GM12878 (cell line): ENCODE measurements at regions of chr2 and their contacts with region 1.

Region 1: DNA sequence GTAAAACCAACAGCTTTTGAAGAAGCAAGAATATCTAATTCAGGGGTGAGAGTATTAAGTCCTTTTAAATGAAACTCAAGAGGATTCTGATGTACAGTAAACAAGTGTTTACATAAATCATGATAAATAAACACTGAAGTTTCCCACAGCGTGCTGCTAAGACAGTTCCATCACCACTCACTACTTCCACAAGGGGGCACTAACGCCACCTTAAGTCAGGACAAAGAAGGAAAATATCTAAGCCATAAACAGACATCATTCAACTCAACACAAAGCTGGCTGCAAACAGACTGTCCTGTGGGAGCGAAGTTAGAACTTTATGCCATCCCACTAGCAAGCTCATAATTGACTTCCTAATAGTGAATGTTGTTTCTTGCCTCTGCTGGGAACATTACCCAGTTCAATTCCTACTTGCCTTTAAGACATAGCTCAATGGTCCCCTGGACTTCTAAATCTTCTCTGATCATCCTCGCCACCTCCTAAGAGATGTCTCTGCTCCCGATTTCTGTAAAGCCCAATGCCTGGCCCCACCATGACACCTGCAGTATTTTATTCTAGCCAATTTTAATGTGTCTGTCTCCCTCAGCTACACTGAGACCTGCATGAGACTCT is 36.5 kb downstream of the MRPL44 start:
- DNase-seq: no peak
- ATAC-seq: peak; percentile 87
- H3K4me3 ChIP-seq: no peak overlapping the region
- H3K27ac ChIP-seq: no peak overlapping the region
- H3K4me1 ChIP-seq: no peaks in the 10 kb centered on the region
- H3K27me3 ChIP-seq: peaks cover 0 to 4% of the 10 kb centered on the region in 2 experiments; a peak in 2 of 4 replicates
- CTCF ChIP-seq: peak; percentile 71 to 81 (median 78)
- EP300 ChIP-seq: no peak
- POLR2A ChIP-seq: no peak
- RAD21 ChIP-seq: peak; percentile 71

Region 2: DNA sequence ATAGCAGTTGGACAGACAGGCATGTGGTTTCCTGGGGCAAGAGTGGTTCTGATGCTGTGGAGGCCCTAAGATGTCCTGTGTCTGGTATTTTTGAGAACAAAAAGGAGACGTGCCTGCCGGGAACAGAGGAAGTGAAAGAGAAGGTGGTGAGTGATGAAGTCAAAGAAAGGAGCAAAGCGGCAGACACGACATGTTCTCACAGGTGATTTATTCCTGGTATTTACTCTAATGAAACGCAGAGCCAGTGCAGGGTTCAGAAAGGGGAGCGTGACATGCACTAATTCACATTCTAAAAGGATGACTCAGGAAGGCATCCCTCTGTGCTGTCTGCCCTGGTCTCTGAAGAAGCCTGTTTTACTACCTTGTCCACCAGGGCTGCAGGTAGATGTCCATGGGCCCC is 730.8 kb before region 1 on chr2:
- CTCF ChIA-PET with region 1: no interaction called
- POLR2A ChIA-PET with region 1: no interaction called
- RAD21 ChIA-PET with region 1: no interaction called
- SMC1A ChIA-PET with region 1: no interaction called
- in situ Hi-C with region 1: no loop called
- intact Hi-C with region 1: no loop called
- DNase-seq: no peak
- ATAC-seq: no peak; the same call in 1 of the 3 replicates
- H3K4me3 ChIP-seq: no peak overlapping the region
- H3K27ac ChIP-seq: no peak overlapping the region
- H3K4me1 ChIP-seq: no peaks in the 10 kb centered on the region
- H3K27me3 ChIP-seq: no peaks in the 10 kb centered on the region
- CTCF ChIP-seq: no peak
- EP300 ChIP-seq: no peak
- POLR2A ChIP-seq: no peak
- RAD21 ChIP-seq: no peak

Region 3: DNA sequence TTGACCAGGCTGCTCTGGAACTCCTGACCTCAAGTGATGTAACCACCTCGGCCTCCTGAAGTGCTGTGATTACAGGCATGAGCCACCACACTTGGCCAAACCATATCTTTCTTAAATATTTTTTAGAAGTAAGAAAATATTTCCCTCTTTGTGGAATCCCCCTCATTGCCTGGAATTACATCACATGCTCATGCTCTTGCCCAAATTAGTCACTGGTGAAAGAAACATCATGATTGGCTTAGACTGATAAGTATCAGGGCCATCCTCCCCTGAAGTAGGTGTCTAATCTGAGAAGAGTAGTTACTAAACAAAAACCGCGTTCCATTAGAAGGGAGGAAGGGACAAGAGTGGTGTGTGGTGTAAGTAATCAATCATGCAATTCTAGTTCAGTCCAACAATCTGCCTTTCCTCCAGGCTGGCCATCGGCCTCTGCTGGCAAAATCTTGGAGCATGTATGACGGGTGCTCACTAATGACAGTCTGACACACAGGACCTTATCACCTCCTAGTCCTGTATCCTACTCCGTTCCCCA is 339.3 kb before region 1 on chr2:
- CTCF ChIA-PET with region 1: no interaction called
- POLR2A ChIA-PET with region 1: no interaction called
- RAD21 ChIA-PET with region 1: no interaction called
- SMC1A ChIA-PET with region 1: no interaction called
- in situ Hi-C with region 1: no loop called
- intact Hi-C with region 1: no loop called
- DNase-seq: no peak
- ATAC-seq: no peak
- H3K4me3 ChIP-seq: no peak overlapping the region
- H3K27ac ChIP-seq: no peak overlapping the region
- H3K4me1 ChIP-seq: no peaks in the 10 kb centered on the region
- H3K27me3 ChIP-seq: no peaks in the 10 kb centered on the region
- CTCF ChIP-seq: no peak
- EP300 ChIP-seq: no peak
- POLR2A ChIP-seq: no peak
- RAD21 ChIP-seq: no peak

Region 4: GRCh38 chr2:223957092-223957851 is 36.5 kb before region 1 on chr2 and contains the start of gene MRPL44:
- CTCF ChIA-PET with region 1: interaction called, 18 read pairs
- POLR2A ChIA-PET with region 1: no interaction called
- RAD21 ChIA-PET with region 1: no interaction called
- SMC1A ChIA-PET with region 1: interaction called, 5 read pairs
- in situ Hi-C with region 1: no loop called
- intact Hi-C with region 1: no loop called
- DNase-seq: peak; percentile 76
- ATAC-seq: peak; percentile 99
- H3K4me3 ChIP-seq: peak within 1 kb of the TSS; percentile 87
- H3K27ac ChIP-seq: peak within 1 kb of the TSS; percentile 87
- H3K4me1 ChIP-seq: peaks cover 24% of the 10 kb centered on the region
- H3K27me3 ChIP-seq: no peaks in the 10 kb centered on the region
- CTCF ChIP-seq: no peak
- EP300 ChIP-seq: no peak
- POLR2A ChIP-seq: peak; percentile 96
- RAD21 ChIP-seq: no peak
- polyA plus RNA-seq, gene MRPL44: 18.3 to 22.0 TPM

Region 5: GRCh38 chr2:223979730-223980396 is 13.9 kb before region 1 on chr2:
- CTCF ChIA-PET with region 1: interaction called, 149 read pairs
- POLR2A ChIA-PET with region 1: no interaction called
- RAD21 ChIA-PET with region 1: interaction called, 5 read pairs
- SMC1A ChIA-PET with region 1: interaction called, 15 read pairs
- in situ Hi-C with region 1: no loop called
- intact Hi-C with region 1: no loop called
- DNase-seq: no peak
- ATAC-seq: no peak
- H3K4me3 ChIP-seq: no peak overlapping the region
- H3K27ac ChIP-seq: no peak overlapping the region
- H3K4me1 ChIP-seq: no peaks in the 10 kb centered on the region
- H3K27me3 ChIP-seq: no peaks in the 10 kb centered on the region; a peak in 2 of 4 replicates
- CTCF ChIP-seq: no peak
- EP300 ChIP-seq: no peak
- POLR2A ChIP-seq: no peak
- RAD21 ChIP-seq: no peak

Region 6: DNA sequence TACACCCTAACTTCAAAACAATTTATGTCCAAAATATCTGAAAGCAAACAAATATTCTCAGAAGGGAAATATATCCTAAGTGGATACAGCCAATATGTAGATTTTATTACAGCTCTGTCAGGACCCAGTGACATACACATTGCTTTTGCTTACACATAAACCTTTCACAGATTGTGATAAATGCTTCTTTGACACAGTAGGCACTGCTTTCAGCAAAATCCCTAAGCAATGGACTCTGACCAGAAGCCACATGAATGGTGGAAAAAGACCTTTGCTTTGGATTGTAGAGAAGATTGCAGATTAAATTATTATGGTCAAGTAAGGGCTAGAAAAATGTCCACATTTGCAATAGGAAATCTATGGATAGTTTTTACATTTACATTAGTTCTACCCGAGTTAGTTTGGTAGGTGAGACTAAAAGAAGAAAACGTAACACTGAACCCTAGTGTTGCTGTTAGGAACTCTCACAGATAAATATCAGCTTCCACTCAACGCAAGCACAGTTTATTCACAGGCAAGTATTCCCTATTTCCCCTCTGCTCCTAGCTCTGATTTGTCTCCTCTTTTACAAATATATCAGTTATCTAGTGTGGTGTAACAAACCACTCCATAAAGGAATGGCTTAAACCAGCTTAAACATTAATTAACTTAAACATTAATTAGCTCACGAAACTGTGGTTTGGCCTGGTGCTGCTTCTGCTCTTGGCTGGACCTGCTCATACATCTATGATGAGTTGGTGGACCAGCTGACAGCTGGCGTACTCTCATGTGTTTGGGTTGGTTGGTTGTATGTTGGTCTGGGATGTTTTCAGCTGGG is 69.0 kb after region 1 on chr2:
- CTCF ChIA-PET with region 1: interaction called, 14 read pairs
- POLR2A ChIA-PET with region 1: no interaction called
- RAD21 ChIA-PET with region 1: no interaction called
- SMC1A ChIA-PET with region 1: interaction called, 4 read pairs
- in situ Hi-C with region 1: no loop called
- intact Hi-C with region 1: no loop called
- DNase-seq: no peak
- ATAC-seq: no peak
- H3K4me3 ChIP-seq: no peak overlapping the region
- H3K27ac ChIP-seq: no peak overlapping the region
- H3K4me1 ChIP-seq: no peaks in the 10 kb centered on the region
- H3K27me3 ChIP-seq: peaks cover 0 to 2% of the 10 kb centered on the region in 2 experiments; a peak in 1 of 4 replicates
- CTCF ChIP-seq: 0 out of 6 replicates have a peak, but pooled peaks of 1 of the 3 experiments have one; percentile 0
- EP300 ChIP-seq: no peak
- POLR2A ChIP-seq: no peak
- RAD21 ChIP-seq: no peak

Region 7: DNA sequence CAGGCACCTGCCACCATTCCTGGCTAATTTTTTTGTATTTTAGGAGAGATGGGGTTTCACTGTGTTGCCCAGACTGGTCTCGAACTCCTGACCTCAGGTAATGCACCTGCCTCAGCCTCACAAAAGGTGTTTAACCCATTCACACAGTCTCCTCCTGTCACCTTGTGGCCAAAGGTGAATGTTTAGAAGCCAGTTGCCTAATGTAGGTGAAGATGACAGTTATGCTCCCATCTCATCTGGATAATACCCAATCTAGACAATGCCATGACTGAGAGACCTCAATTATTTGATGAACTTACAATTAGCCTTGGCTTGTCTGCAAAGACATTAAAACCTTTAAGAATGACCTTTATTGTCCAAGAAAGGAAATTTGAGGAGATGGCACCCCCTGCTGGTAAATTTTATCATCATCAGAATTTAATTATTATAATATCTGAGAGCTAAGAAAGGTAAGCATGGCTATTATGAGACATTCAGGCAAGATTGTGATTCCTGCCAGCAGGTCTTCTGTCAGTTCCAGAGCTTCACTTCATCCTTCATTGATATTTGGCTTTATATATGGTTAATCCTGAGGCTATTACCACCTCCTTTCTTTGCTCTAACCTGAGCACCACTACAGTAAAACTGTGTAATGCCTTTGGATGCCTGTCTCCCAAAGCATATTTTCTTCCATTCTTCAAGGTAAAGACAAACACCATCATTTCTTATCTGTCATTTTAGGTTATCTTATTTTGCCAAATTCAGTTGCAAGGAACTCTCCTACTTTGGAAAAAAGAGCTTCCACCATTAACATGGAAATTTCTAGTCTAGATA is 290.6 kb after region 1 on chr2:
- CTCF ChIA-PET with region 1: interaction called, 188 read pairs
- POLR2A ChIA-PET with region 1: no interaction called
- RAD21 ChIA-PET with region 1: interaction called, 93 read pairs
- SMC1A ChIA-PET with region 1: interaction called, 108 read pairs
- in situ Hi-C with region 1: loop called (anchors 5 kb)
- intact Hi-C with region 1: loop called (anchors 1 kb)
- DNase-seq: no peak
- ATAC-seq: peak; percentile 52
- H3K4me3 ChIP-seq: no peak overlapping the region
- H3K27ac ChIP-seq: no peak overlapping the region
- H3K4me1 ChIP-seq: no peaks in the 10 kb centered on the region
- H3K27me3 ChIP-seq: no peaks in the 10 kb centered on the region; a peak in 1 of 4 replicates
- CTCF ChIP-seq: peak; percentile 32 to 50 (median 45); a peak in 4 of 6 replicates
- EP300 ChIP-seq: no peak
- POLR2A ChIP-seq: no peak
- RAD21 ChIP-seq: peak; percentile 68